Activated naive CD4-positive, alpha-beta T cell treated with anti-CD3 and anti-CD28 coated beads, Interleukin-2, amount 10 ng/mL, durations not matched to agents 7 days and 5 days (primary cell): ENCODE measurements at regions of chr14 and their contacts with region 1.

Region 1: DNA sequence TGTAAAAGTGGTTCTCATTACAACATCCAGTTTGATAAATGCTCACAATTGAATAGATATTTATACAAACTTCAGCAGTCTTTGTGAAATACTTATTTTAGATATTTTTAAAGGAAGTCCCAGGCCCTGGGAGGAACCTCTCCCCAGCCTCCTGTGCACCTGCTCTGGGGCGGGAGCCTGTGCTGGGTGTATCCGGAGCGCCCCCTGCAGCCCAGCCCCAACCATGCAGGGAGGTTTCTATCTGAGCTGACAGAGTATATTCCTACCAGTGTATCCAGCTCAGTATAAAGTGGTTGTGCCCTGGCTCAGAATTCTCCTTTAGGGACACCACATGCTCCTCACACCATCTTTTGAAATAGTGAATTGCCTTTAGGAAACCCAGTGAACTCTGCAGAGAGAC is 851.8 kb downstream of the TMEM121 start:
- DNase-seq: peak; percentile 60
- H3K4me3 Mint-ChIP-seq: no peak overlapping the region
- H3K27ac Mint-ChIP-seq: no peak overlapping the region
- H3K4me1 Mint-ChIP-seq: peaks cover 20% of the 10 kb centered on the region
- H3K27me3 Mint-ChIP-seq: peaks cover 16% of the 10 kb centered on the region

Region 2: GRCh38 chr14:106294324-106294723 is 83.9 kb before region 1 on chr14:
- CTCF ChIA-PET with region 1: no interaction called
- DNase-seq: no peak
- H3K4me3 Mint-ChIP-seq: no peak overlapping the region
- H3K27ac Mint-ChIP-seq: no peak overlapping the region
- H3K4me1 Mint-ChIP-seq: peaks cover 2% of the 10 kb centered on the region
- H3K27me3 Mint-ChIP-seq: peaks cover 33% of the 10 kb centered on the region

Region 3: DNA sequence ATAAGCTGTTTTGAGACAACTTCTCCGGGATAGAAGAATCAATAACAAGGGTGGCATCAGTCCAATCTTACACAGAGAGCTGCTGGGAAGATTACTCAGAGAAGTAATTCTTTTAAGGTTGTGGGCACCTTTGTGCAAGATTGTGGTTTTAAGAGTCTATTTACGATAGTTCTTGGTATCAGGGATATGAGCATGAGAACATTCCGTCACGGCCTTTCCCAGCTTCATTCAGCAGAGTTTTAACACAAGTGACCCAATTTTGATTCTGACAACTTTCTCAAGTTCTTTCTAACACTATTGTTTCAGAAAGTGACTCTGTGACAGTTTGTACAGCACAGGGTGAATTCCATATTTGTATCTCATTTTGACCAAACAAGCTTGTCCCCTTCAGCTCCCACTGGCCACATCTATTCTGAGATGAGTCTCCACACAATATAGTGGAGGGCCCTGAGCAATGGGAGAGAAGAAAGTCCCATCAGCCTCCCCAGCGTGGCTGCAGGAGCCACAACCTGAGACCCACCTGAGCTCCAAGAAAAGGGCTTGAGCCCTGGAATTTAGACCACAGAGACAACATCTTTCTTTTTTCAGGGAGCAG is 17.4 kb after region 1 on chr14:
- CTCF ChIA-PET with region 1: interaction called, 34 read pairs
- DNase-seq: no peak
- H3K4me3 Mint-ChIP-seq: peak overlapping the region; percentile 17
- H3K27ac Mint-ChIP-seq: peak overlapping the region; percentile 75
- H3K4me1 Mint-ChIP-seq: peaks cover 33% of the 10 kb centered on the region
- H3K27me3 Mint-ChIP-seq: peaks cover 24% of the 10 kb centered on the region

Region 4: DNA sequence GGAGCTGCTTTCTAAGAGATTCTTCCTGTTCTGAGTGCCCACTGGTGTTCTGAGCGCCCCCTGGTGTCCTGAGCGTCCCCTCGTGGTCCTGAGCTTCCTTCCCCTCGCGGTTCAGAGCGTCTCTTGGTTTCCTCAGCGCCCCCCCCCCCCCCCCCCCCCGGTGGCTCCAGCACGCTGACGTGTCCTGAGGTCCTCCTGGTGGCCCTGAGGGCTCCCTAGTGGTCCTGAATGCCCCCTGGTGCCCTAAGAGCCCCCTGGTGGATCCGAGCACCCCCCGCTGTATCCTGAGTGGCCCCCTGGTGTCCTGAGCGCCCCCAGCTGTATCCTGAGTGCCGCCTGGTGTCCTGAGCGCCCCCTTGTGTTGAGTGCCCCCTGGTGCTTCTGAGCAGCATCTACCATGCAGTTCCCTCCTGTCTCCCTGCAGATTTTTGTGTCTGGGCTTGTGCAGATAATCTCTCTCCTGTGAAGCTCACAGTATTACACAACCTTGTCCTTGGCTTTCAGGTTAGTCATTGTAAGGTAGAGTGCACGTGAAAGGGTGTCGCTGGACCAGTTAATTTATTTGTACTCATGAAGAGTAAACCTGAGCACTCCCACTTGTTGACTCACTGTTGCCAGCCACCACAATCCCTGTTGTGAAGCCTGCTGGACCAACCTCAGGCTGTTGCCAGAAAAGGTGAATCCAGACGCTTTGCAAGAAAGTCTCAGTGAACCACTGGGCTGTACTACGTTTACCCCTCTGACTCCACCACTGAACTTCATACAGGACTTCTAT is 316.6 kb after region 1 on chr14:
- CTCF ChIA-PET with region 1: no interaction called
- DNase-seq: peak; percentile 61
- H3K4me3 Mint-ChIP-seq: no peak overlapping the region
- H3K27ac Mint-ChIP-seq: no peak overlapping the region
- H3K4me1 Mint-ChIP-seq: peaks cover 28% of the 10 kb centered on the region
- H3K27me3 Mint-ChIP-seq: peaks cover 20% of the 10 kb centered on the region